Heart right ventricle (tissue), 16 donors: ENCODE measurements at regions of chr4 and their contacts with region 1.

Region 1: GRCh38 chr4:36461344-36461743 is 179.9 kb downstream of the DTHD1 start:
- DNase-seq: no peak
- ATAC-seq: no peak
- H3K4me3 ChIP-seq: no peak overlapping the region
- H3K27ac ChIP-seq: no peak overlapping the region
- H3K4me1 ChIP-seq: no peaks in the 10 kb centered on the region
- H3K27me3 ChIP-seq: no peaks in the 10 kb centered on the region
- CTCF ChIP-seq: no peak

Region 2: DNA sequence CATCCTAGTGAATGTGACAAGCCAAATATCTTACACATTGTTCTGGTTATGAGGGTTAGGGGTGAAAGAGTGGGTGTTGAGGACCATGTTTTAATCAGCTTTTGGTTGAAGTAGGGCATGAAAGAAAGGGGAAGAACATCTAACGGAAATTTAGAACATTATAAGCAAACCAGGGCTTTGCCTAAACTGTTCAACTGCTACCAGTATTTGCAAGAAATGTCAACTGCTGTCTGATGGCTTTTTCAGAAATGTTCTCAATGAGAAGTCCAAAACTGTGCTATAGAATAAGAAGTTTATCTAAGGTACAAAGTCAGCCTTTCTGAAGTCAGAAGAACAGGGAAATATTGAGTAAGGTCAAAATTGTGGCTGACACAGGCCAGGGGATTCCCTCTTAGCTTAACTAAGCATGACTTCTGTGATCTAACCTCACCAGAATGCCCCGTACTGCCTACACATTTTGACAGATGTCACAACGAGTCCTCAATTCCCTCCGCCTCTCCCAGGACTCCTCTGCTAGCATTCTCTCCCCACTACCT is 112.9 kb before region 1 on chr4:
- intact Hi-C with region 1: no loop called
- DNase-seq: no peak
- ATAC-seq: no peak
- H3K4me3 ChIP-seq: no peak overlapping the region
- H3K27ac ChIP-seq: no peak overlapping the region
- H3K4me1 ChIP-seq: peaks cover 0 to 9% (median 0%) of the 10 kb centered on the region in 9 donors
- H3K27me3 ChIP-seq: no peaks in the 10 kb centered on the region
- CTCF ChIP-seq: no peak

Region 3: DNA sequence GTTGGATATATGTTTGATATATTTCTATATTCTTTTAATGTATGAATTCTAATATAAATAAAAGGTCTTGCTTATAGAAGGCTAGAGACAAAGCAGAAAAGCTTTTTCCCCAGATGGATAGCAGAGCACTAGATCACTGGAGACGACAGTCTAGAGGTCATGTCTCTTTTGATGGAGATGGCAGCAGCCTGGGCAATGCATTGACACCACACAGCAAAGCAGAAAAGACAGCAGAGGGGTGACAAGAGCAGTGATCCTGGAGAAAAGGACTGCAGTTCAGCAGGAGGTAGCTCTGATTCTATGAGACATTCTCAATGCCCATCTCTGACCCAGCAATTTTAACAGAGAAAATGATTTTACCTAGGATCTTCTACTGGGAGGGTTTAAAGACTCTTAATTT is 30.7 kb after region 1 on chr4:
- intact Hi-C with region 1: loop called in 1 of 10 experiments (anchors 1 kb)
- DNase-seq: no peak
- ATAC-seq: no peak
- H3K4me3 ChIP-seq: no peak overlapping the region
- H3K27ac ChIP-seq: no peak overlapping the region
- H3K4me1 ChIP-seq: no peaks in the 10 kb centered on the region
- H3K27me3 ChIP-seq: no peaks in the 10 kb centered on the region
- CTCF ChIP-seq: no peak

Region 4: DNA sequence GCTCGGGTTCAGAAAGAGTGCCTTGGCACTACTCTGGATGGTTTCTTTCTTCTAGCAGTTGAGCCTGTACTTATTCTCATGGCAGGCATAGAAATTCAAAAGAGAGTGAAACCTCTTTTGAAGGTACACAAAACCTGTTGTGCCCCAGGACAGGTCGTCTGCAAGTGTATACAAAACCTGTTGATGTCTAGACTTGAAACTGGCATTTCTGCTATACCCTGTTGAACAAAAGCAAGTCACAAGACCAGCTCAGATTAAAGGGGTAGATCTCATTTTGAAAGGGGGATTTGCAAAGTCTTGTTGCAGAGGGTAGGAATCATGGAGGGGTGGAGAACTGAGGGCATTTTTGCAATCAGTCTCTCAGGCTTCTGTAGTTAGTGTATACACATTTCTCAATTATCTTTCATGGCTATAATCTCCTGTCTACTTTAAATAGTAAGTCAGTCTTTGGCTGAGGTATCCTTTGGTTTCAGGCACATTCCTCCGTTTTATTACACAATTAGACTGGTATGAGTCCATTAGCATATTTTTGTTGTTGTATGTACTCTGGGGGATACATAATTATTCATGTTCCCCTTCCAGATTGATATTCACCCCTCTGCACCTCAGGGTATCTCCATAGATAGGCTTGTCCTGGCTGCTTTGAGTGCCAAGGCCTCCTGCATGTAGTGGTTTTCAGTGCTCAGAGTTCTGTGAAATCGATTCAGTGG is 71.5 kb after region 1 on chr4:
- intact Hi-C with region 1: no loop called
- DNase-seq: no peak
- ATAC-seq: no peak
- H3K4me3 ChIP-seq: no peak overlapping the region
- H3K27ac ChIP-seq: no peak overlapping the region
- H3K4me1 ChIP-seq: no peaks in the 10 kb centered on the region
- H3K27me3 ChIP-seq: no peaks in the 10 kb centered on the region
- CTCF ChIP-seq: no peak